ENCODE measurements at regions of chr4 and their contacts with region 1.

Region 1: GRCh38 chr4:155953151-155954114 is at the start of gene CTSO:
- DNase-seq: peak; percentile 80 to 91 (median 90)
- ATAC-seq: peak; percentile 97 to 98
- H3K4me3 ChIP-seq: peak within 1 kb of the TSS; percentile 61
- H3K27ac ChIP-seq: peak within 1 kb of the TSS; percentile 93
- H3K4me1 ChIP-seq: no peaks in the 10 kb centered on the region
- H3K27me3 ChIP-seq: no peaks in the 10 kb centered on the region
- total RNA-seq, gene CTSO: 10.5 to 15.9 (median 12.9) TPM

Region 2: DNA sequence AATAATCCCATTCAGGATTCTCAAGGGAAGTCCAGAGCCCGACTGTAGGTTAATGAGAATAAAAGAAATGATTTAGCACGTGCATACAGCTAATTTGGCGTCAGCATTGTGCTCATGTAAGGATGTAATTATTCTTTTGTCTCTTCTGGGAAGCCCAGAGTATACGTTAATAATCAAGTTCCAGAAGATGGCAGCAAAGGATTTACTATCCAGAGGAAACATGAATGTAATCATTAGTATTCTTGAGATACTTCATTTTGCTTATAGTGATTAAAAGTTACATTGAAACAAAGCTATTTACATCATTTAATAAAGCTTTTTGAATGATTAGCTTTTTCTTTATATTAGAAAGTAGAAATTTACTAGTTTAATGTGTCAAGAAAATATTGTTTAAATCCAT is 549.5 kb before region 1 on chr4:
- intact Hi-C with region 1: loop called in 1 of 4 experiments (anchors 10 kb)
- DNase-seq: no peak
- ATAC-seq: peak; percentile 50 to 63
- H3K4me3 ChIP-seq: no peak overlapping the region
- H3K27ac ChIP-seq: no peak overlapping the region
- H3K4me1 ChIP-seq: no peaks in the 10 kb centered on the region
- H3K27me3 ChIP-seq: no peaks in the 10 kb centered on the region

Region 3: GRCh38 chr4:155809835-155810234 is 143.6 kb before region 1 on chr4:
- intact Hi-C with region 1: loop called in 3 of 4 experiments (anchors 5 kb)
- DNase-seq: no peak
- ATAC-seq: peak; percentile 64 to 74
- H3K4me3 ChIP-seq: no peak overlapping the region
- H3K27ac ChIP-seq: no peak overlapping the region
- H3K4me1 ChIP-seq: no peaks in the 10 kb centered on the region
- H3K27me3 ChIP-seq: no peaks in the 10 kb centered on the region

Region 4: GRCh38 chr4:155819066-155819465 is 134.4 kb before region 1 on chr4:
- intact Hi-C with region 1: loop called in 3 of 4 experiments (anchors 5 kb)
- DNase-seq: peak; percentile 19 to 55 (median 52)
- ATAC-seq: no peak
- H3K4me3 ChIP-seq: no peak overlapping the region
- H3K27ac ChIP-seq: no peak overlapping the region
- H3K4me1 ChIP-seq: no peaks in the 10 kb centered on the region
- H3K27me3 ChIP-seq: no peaks in the 10 kb centered on the region

Region 5: GRCh38 chr4:156439576-156440200 is 486.3 kb after region 1 on chr4:
- intact Hi-C with region 1: no loop called
- DNase-seq: no peak
- ATAC-seq: no peak
- H3K4me3 ChIP-seq: no peak overlapping the region
- H3K27ac ChIP-seq: no peak overlapping the region
- H3K4me1 ChIP-seq: no peaks in the 10 kb centered on the region
- H3K27me3 ChIP-seq: no peaks in the 10 kb centered on the region

Measured in right cardiac atrium (tissue), 5 donors.